GM23248 (cell line): ENCODE measurements at regions of chr11 and their contacts with region 1.

Region 1: GRCh38 chr11:75867775-75868374 is 52.9 kb downstream of the UVRAG start:
- DNase-seq: peak; percentile 71
- H3K4me3 ChIP-seq: no peak overlapping the region
- H3K27ac ChIP-seq: no peak overlapping the region
- H3K4me1 ChIP-seq: no peaks in the 10 kb centered on the region
- H3K27me3 ChIP-seq: no peaks in the 10 kb centered on the region

Region 2: DNA sequence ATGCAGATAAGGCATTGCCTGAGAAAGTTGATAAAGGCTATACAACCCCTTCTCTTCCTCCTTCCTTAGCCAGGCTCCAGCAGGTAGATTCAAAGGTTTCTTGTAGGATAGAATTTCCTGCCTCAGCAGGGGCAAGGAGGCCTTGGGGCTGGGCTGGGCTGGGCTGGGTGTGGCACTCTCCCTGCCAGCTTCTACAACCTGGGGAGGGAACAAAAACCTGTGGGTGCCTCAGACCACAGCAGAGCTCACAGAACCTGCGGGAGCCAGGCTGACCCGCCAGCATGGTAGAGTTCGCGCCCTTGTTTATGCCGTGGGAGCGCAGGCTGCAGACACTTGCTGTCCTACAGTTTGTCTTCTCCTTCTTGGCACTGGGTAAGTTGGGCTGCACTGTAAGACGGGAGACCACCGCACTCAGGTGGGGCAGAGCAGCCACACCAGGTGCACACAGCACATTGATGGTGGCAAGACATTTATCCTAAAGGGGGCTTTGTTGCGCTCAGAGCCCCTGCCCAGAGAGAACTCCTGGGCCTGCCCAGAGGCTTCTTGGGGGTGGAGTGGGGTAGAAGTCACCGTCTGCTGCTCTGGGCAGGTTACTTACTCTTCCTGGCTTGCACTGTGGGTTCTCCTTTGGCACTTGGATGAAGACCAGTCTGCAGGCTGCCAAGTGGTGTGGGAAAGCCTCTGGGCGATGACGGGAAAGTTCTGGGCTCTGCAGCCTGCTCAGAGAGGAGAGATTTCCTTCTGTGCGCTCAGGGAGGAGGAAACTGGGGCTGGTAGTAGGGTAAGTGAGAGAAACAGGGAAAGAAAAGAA is 150.1 kb before region 1 on chr11 and contains the start of gene MOGAT2:
- in situ Hi-C with region 1: loop called (anchors 10 kb)
- DNase-seq: no peak
- H3K4me3 ChIP-seq: no peak within 1 kb of the TSS
- H3K27ac ChIP-seq: no peak within 1 kb of the TSS
- H3K4me1 ChIP-seq: no peaks in the 10 kb centered on the region
- H3K27me3 ChIP-seq: no peaks in the 10 kb centered on the region
- total RNA-seq, gene MOGAT2: not detected in 2 replicates

Region 3: DNA sequence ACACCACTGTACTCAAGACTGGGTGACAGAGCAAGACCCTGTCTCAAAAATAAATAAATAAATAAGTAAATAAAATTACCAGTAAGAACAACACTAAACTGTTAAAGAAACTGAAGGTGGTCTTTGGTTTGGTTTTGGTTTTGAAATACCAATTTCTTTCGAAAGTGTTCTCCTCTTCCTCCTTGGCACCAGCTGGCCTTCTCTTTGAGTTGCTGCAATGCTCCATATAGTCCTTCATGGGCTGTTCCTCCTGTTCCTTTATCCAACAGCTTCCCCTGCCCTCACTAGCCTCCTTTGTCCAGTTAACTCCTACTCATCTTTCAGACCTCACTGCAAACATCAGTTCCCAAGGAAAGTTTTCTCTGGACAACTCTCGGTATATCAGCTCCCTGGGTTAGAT is 57.9 kb before region 1 on chr11:
- in situ Hi-C with region 1: loop called (anchors 5 kb)
- DNase-seq: no peak
- H3K4me3 ChIP-seq: no peak overlapping the region
- H3K27ac ChIP-seq: no peak overlapping the region
- H3K4me1 ChIP-seq: peaks cover 3% of the 10 kb centered on the region; the same call in 1 of the 2 replicates
- H3K27me3 ChIP-seq: no peaks in the 10 kb centered on the region

Region 4: DNA sequence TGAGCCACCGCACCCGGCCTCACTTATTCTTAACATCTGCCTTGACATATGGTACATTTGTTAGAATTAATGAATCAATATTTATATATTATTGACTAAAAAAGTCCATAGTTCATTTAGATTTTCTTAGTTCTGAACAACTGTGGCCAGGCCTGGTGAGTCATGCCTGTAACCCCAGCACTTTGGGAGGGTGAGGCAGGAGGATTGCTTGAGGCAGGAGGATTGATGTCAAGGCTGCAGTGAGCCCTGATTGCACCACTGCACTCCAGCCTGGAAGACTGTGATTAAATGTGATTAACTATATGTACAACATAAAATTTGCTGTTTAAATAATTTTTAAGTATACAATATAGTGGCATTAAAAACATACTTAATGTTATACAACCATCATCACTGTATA is 47.2 kb before region 1 on chr11:
- in situ Hi-C with region 1: no loop called
- DNase-seq: peak; percentile 66
- H3K4me3 ChIP-seq: no peak overlapping the region
- H3K27ac ChIP-seq: no peak overlapping the region
- H3K4me1 ChIP-seq: peaks cover 24% of the 10 kb centered on the region
- H3K27me3 ChIP-seq: no peaks in the 10 kb centered on the region

Region 5: GRCh38 chr11:76096552-76096951 is 228.7 kb after region 1 on chr11:
- in situ Hi-C with region 1: no loop called
- DNase-seq: no peak
- H3K4me3 ChIP-seq: no peak overlapping the region
- H3K27ac ChIP-seq: no peak overlapping the region
- H3K4me1 ChIP-seq: no peaks in the 10 kb centered on the region
- H3K27me3 ChIP-seq: no peaks in the 10 kb centered on the region